G401 (cell line): ENCODE measurements at regions of chr17 and their contacts with region 1.

Region 1: GRCh38 chr17:752002-752619 is at the start of gene GEMIN4:
- DNase-seq: peak; percentile 83
- total RNA-seq, gene GEMIN4: 36.1 and 39.9 TPM in 2 replicates

Region 2: DNA sequence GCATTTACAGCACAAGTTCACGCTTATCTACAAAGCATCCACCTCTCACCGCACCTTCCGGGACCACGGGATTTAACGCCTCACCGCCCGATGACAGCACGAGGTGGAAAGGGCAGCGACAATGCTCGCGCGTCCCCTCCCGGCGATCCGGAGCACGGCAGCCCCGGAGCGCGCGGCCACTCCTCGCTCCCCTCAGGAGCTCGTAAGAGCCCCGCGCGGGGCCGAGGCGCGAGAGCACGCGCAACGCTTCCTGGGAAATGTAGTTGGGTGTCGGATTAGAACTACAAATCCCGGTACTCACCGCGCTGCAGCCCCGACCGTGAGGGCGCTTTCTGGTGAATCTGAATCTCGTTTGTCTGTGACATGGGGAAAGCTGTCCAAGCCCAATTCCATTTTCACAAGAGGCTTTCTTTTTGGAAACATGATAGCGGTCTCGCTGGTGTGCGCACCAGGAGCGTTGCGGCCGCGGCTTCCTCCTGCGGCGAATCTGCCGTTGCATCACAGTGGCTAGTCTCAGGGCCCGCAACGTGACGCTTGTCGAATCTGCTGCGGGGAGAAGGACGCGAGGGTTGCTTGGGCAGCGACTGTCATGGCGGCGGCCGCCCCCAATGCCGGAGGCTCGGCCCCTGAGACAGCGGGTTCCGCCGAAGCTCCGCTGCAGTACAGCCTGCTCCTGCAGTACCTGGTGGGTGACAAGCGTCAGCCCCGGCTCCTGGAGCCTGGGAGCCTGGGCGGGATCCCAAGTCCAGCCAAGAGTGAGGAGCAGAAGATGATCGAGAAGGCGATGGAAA is 244.6 kb after region 1 on chr17 and contains the start of gene TIMM22:
- in situ Hi-C with region 1: loop called (anchors 25 kb)
- DNase-seq: peak; percentile 95
- total RNA-seq, gene TIMM22: 25.9 and 27.4 TPM in 2 replicates